Astrocyte of the cerebellum (primary cell): ENCODE measurements at regions of chr5 and their contacts with region 1.

Region 1: DNA sequence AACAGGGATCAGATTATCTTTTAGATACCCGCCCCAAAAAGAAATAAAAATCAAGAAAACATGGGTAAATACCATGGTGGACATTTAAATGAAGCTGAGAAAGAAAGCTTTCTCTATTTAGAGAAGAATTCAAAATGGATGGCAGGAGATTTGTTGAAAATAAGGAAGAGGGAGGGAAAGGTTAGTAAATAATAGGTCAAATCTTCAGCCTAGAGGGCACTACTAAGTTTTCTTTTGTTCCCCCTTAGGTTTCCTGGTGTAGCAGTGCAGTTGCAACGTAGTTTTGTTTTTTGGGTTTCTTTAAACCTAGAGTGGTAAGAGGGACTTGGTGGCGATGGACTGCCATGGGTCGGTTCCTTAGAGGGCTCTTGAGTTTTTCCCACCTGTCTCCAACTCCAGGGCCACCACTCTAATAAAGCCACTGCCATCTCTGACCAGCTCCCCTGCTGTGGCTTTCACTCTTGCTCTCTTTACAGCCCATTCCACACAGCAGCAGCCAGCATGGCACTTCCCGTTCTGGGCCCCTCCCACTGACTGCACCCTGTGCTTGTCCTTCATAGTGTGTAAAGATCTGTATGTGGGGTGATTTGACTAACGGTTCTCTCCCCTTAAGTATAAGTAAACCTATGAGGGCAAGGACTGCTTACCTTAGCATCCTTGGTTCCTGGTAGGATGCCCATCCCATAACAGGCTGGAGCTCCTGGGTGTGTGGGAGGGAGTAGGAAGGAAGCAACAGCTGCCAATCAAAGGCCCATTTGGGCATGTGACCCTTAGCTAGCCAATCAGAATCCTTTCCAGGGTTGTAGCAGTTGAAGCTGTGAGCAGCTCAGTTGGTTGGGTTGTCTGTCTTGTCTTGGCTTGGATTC is 118.3 kb downstream of the SLC1A3 start:
- DNase-seq: no peak
- H3K4me3 ChIP-seq: no peak overlapping the region
- CTCF ChIP-seq: no peak

Region 2: GRCh38 chr5:36801521-36801920 is 76.8 kb after region 1 on chr5:
- in situ Hi-C with region 1: loop called (anchors 5 kb)
- DNase-seq: no peak
- H3K4me3 ChIP-seq: no peak overlapping the region
- CTCF ChIP-seq: no peak